Colonic mucosa (tissue), 4 donors: ENCODE measurements at regions of chr9 and their contacts with region 1.

Region 1: GRCh38 chr9:70484210-70485130 is 70.0 kb upstream of the KLF9 start:
- DNase-seq: peak; percentile 57
- H3K4me3 ChIP-seq: no peak overlapping the region
- H3K27ac ChIP-seq: peak overlapping the region; percentile 9
- H3K4me1 ChIP-seq: no peaks in the 10 kb centered on the region
- H3K27me3 ChIP-seq: no peaks in the 10 kb centered on the region
- CTCF ChIP-seq: peak; percentile 54

Region 2: DNA sequence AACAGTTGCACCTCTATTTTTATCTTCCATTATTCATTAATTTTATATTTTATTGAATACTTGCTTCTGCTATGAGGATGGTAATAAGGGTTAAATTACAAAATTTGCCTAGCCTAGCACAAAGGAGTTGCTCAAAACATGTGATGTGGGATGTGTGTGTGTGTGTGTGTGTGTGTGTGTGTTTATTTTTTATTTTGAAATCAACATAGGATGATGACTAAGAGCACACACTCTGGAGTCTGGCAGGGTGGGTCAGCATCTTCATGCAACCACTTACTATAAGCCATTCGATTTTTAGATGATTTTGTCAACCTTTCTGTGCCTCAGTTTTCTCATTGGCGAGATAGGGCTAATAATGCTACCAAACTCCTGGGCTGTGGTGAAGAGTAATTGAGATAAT is 498.5 kb before region 1 on chr9:
- intact Hi-C with region 1: no loop called
- DNase-seq: no peak
- H3K4me3 ChIP-seq: no peak overlapping the region
- H3K27ac ChIP-seq: no peak overlapping the region
- H3K4me1 ChIP-seq: no peaks in the 10 kb centered on the region
- H3K27me3 ChIP-seq: no peaks in the 10 kb centered on the region
- CTCF ChIP-seq: no peak

Region 3: GRCh38 chr9:70352802-70353201 is 131.7 kb before region 1 on chr9:
- intact Hi-C with region 1: loop called (anchors 5 kb)
- DNase-seq: no peak
- H3K4me3 ChIP-seq: no peak overlapping the region
- H3K27ac ChIP-seq: no peak overlapping the region
- H3K4me1 ChIP-seq: no peaks in the 10 kb centered on the region
- H3K27me3 ChIP-seq: no peaks in the 10 kb centered on the region
- CTCF ChIP-seq: peak; percentile 28

Region 4: DNA sequence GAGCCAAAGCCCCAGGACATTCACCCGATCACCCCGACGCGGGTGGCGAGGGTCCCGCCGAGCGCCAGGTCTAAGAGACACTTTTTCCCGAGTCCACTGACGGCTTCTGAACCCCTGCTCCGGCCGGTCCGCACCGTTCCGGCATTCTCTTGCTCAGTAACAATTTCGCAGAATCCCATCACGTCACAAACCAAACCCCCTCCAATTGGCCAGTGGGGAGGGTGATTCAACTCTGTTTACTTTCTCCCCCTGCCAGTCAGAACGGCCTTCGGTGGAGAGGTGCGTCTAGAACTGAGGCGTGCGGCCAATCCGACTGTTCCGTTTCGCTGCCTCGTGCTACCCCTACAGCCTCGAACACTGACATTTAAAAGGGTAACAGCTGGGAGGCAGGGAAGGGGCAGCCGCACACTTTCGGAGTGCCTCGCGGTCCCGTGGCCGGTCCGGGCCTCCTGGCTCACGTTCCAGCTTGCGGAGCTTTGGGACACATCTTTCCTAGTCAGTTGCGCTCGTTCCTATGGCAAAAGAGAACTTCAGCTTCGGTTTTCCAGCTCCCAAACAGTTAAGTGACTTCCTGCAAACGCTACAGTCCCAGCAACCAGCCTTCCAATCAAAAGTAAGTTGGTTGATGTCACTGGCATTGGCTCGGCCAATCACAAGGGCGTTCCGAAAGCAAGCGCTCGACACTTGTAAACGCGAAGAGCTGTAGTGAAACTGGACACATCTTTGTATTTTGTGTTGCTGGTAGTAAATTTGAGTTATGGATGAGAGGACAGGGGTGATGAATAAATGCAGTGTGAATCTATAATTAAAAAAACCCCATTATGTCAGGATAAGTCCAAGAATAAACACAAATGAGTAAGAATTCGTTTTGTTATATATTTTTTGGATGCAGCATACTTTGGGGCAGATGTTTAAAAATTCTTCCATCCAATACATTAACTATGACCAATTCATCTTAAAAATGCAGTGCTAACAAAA is 70.4 kb before region 1 on chr9 and contains the start of gene KLF9:
- intact Hi-C with region 1: loop called (anchors 5 kb)
- DNase-seq: peak; percentile 95
- H3K4me3 ChIP-seq: peak within 1 kb of the TSS; percentile 65
- H3K27ac ChIP-seq: peak within 1 kb of the TSS; percentile 99
- H3K4me1 ChIP-seq: peaks cover 9% of the 10 kb centered on the region
- H3K27me3 ChIP-seq: no peaks in the 10 kb centered on the region
- CTCF ChIP-seq: no peak
- total RNA-seq, gene KLF9: 13.5 to 18.8 TPM

Region 5: DNA sequence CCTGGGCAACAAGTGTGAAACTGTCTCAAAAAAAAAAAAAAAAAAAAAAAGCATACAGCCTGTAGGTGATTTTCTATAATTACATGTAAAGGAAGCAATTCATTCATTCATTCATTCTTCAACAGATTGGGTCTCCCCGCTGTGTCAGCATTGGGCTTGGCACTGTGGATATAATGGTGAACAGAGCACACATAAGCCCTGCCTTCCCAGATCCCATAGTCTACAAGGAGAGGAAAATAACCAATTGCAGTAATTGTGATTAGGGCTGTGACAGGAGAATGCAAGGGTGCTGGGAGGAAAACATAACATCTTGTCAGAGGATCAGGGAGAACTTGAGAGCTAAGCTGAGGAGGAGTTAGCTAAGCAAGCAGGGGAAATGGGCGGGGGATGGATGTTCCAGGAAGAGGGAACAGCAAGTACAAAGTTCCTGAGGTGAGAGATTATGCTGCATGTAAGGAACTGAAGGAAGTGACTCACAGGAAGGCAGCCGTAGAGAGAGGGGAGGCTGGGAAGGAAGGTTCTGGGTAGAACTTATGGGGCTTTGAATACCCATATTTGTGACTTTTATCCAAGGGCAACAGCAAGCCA is 46.0 kb before region 1 on chr9:
- intact Hi-C with region 1: no loop called
- DNase-seq: peak; percentile 89
- H3K4me3 ChIP-seq: no peak overlapping the region
- H3K27ac ChIP-seq: peak overlapping the region; percentile 46
- H3K4me1 ChIP-seq: peaks cover 15% of the 10 kb centered on the region
- H3K27me3 ChIP-seq: no peaks in the 10 kb centered on the region
- CTCF ChIP-seq: no peak

Region 6: GRCh38 chr9:70574151-70574837 is 89.8 kb after region 1 on chr9:
- intact Hi-C with region 1: no loop called
- DNase-seq: no peak
- H3K4me3 ChIP-seq: no peak overlapping the region
- H3K27ac ChIP-seq: no peak overlapping the region
- H3K4me1 ChIP-seq: no peaks in the 10 kb centered on the region
- H3K27me3 ChIP-seq: no peaks in the 10 kb centered on the region
- CTCF ChIP-seq: no peak

Region 7: DNA sequence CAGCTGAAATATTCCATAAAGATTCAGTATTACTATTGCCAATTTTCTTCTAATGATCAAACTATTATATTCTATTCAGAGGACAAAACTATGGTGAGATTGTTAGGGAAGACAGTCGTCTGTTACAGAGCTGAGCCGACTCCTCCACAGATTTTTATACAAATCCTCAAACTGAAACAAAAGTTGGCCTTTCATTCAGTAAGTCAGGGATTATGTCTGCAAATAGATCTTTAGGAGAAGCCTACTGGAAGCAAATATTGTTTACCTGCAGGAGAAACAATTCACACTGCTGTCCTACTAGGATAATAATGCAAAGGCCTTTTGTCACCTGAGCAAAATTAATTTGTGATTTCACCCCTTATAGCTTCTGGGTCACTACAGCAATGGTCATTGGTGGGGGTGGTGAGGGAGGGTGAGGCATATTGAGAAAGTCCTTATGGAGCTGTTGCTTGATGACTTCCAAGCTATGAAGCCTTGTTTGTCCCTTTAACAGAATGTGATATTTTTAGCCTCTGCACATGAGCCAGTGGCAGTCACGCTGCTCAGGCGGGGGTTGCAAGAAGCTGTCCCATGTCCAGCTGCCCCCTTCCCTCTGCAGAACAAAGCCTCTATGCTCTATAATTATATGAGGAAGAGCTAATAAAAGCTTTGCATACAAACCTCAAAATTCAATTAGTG is 130.5 kb after region 1 on chr9:
- intact Hi-C with region 1: no loop called
- DNase-seq: no peak
- H3K4me3 ChIP-seq: no peak overlapping the region
- H3K27ac ChIP-seq: no peak overlapping the region
- H3K4me1 ChIP-seq: no peaks in the 10 kb centered on the region
- H3K27me3 ChIP-seq: no peaks in the 10 kb centered on the region
- CTCF ChIP-seq: no peak